AG04450 (cell line): ENCODE measurements at regions of chr16 and their contacts with region 1.

Region 1: GRCh38 chr16:55494994-55495421 is 13.9 kb upstream of the LPCAT2 start:
- DNase-seq: peak; percentile 87
- H3K4me3 ChIP-seq: no peak overlapping the region
- H3K27ac ChIP-seq: peak overlapping the region; percentile 73
- H3K27me3 ChIP-seq: no peaks in the 10 kb centered on the region
- CTCF ChIP-seq: peak; percentile 29; the same call in 1 of the 2 replicates

Region 2: DNA sequence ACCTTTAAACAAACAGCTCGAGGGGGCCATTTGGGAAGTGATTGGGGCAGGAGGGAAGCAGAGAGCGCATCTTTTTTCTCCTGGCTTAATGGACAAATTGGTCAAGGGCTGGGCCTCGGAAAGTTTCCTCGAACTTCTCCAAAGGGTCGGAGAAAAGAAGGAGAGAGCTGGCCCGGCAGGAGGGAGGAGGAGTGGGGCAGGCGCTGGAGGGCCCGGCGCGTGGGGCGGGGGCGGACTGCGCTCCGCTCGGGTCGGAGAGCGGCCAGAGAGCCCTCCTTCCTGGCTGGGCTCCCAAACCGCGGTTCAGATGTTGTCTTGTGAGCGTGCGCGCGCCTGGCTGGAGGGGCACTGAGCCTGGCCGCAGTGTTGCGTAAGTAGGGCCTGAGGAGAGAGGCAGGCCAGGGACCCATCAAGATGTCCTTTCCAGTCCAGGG is 14.8 kb before region 1 on chr16:
- CTCF ChIA-PET with region 1: interaction called, 24 read pairs
- POLR2A ChIA-PET with region 1: interaction called, 59 read pairs
- DNase-seq: peak; percentile 84
- H3K4me3 ChIP-seq: peak overlapping the region; percentile 94
- H3K27ac ChIP-seq: peak overlapping the region; percentile 87
- H3K27me3 ChIP-seq: no peaks in the 10 kb centered on the region
- CTCF ChIP-seq: no peak

Region 3: DNA sequence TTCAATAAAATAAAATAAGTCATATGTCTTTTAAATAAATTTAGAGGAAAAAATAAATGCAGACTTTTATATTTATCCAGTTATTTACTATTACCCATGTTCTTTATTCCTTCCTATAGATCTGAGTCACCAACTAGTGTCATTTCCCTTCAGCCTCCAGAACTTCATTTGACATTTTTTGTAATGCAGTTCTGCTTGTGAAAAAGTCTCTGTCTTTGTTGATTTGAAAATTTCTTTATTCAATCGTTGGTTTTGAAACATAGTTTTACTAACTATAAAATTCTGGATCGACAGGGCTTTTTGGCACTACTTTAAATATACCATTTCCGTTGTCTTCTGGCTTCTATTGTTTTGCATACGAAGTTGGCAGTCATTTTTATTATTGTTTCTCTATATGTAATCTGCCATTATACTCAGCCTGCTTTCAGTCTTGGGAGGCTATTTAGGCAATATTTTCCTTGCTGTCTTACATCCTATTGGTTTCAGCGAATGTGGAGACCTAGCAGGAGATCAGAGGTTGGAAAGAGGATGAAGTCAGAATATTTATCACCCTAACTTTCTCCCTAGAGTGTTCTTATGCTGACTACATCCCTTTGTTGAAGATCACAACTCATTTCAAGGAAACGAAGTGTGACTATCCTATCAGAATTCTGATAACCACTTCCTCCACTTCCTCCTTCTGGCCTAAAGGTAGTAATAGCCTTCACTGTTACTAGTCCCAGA is 118.8 kb after region 1 on chr16:
- CTCF ChIA-PET with region 1: no interaction called
- POLR2A ChIA-PET with region 1: no interaction called
- DNase-seq: no peak
- H3K4me3 ChIP-seq: no peak overlapping the region
- H3K27ac ChIP-seq: no peak overlapping the region
- H3K27me3 ChIP-seq: peaks cover 2% of the 10 kb centered on the region
- CTCF ChIP-seq: no peak